GM13977 (cell line): ENCODE measurements at regions of chr5 and their contacts with region 1.

Region 1: DNA sequence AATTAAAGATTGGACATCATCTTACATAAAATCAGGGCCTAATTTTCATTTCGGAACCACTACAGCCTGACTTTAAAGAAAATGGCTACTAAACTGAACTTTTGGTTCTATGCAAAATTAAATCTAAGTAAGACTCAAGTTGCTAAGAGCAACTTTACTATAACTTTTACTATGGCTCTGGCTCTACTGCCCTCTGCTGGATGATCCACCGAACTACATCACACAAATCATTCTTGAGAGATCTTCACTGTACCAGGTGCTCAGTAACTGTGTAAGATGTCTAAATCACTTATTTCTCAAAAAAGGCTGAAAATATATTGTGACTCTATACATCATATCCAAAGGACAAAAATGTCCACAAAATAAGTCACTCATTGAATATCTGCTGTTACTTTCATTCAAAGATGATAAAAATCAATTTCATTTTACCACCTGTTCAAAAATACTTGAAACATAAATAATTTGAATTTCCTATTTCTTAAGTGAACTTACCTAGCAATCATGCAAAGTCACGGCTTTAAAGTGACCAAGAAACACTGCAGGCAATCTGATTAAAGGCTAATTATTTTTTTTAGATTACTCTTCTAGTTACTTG is 13.5 kb downstream of the MOCS2 start:
- DNase-seq: peak; percentile 28
- CTCF ChIP-seq: peak; percentile 78

Region 2: DNA sequence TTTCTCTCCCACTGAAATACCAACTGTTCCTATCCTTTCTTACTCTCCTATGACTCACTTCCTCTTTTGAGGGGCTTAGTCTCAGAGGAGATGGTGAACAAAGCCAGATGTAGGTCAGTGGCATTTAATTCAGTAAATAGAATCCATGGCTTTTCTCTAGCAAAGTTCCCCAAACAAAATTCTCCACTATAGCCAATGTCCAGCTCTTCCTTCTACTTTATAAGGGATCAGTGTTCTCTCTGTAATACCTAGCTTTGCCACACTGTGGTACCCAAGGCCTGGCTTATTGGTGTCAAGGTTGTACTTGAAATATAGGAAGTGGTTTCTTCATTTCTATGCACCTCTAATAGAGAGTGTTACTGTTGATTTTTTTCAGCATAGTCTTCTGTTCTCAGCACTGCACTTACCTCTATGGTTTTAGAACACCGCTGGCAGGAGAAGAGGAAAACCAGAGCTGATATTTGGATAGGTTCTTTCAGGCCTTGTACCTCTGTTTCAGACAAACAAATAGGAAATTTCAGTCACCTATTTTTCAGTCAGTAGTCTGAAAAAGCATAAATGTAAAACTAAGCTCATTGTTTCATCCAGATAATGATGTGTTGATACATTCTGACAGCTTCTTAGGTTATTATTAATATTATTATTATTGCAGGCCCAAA is 147.5 kb before region 1 on chr5:
- in situ Hi-C with region 1: loop called (anchors 5 kb)
- DNase-seq: peak; percentile 57
- CTCF ChIP-seq: peak; percentile 83